Activated B cell treated with CpG ODN at 0.5 μM for 24 hours (primary cell): ENCODE measurements at regions of chr15 and their contacts with region 1.

Region 1: DNA sequence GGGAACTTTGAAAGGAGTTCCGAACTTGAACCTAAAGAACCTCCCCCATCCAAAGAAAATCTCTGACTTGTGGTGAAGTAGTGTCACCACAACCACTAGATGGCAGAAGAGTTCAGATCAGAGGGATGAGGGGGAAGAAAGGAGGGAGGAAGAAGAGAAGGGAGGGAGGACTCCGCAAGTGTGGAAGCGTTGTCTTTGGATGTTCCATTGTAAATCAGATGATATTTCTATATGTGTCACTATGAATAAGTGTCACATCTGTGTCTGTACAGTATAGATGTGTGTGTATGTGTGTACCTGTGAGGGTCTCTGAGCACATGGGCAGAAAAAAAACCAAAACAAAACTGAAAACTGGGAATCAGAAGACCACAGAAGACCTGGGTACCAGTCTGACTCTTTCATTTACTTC is 16.9 kb downstream of the SLC24A1 start:
- DNase-seq: no peak
- ATAC-seq: peak; percentile 73
- H3K4me3 Mint-ChIP-seq: no peak overlapping the region
- H3K27ac Mint-ChIP-seq: no peak overlapping the region
- H3K4me1 Mint-ChIP-seq: peaks cover 8% of the 10 kb centered on the region
- H3K27me3 Mint-ChIP-seq: no peaks in the 10 kb centered on the region
- CTCF ChIP-seq: peak; percentile 35

Region 2: DNA sequence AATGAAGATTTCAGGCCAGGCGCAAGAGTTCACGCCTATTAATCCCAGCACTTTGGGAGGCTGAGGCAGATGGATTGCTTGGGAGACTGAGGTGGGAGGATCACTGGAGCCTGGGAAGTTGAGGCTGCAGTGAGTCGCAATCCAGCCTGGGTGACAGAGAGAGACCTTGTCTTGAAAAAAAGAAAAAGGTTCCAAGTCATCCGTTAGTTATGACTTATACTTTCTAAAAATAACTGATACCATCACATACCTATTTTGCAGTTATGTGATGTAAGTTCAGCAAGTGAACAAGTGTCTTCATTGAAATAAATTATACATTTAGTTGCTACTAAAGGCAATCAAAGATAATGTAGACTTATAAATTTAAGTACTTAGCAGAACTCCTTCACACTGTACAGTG is 475.6 kb before region 1 on chr15:
- CTCF ChIA-PET with region 1: no interaction called
- POLR2A ChIA-PET with region 1: no interaction called
- intact Hi-C with region 1: no loop called
- DNase-seq: no peak
- ATAC-seq: no peak
- H3K4me3 Mint-ChIP-seq: no peak overlapping the region
- H3K27ac Mint-ChIP-seq: no peak overlapping the region
- H3K4me1 Mint-ChIP-seq: no peaks in the 10 kb centered on the region
- H3K27me3 Mint-ChIP-seq: no peaks in the 10 kb centered on the region
- CTCF ChIP-seq: no peak

Region 3: GRCh38 chr15:65856821-65857455 is 218.3 kb after region 1 on chr15:
- CTCF ChIA-PET with region 1: interaction called, 8 read pairs
- POLR2A ChIA-PET with region 1: no interaction called
- intact Hi-C with region 1: loop called (anchors 1 kb)
- DNase-seq: peak; percentile 47
- ATAC-seq: peak; percentile 82
- H3K4me3 Mint-ChIP-seq: no peak overlapping the region
- H3K27ac Mint-ChIP-seq: no peak overlapping the region
- H3K4me1 Mint-ChIP-seq: peaks cover 14% of the 10 kb centered on the region
- H3K27me3 Mint-ChIP-seq: no peaks in the 10 kb centered on the region
- CTCF ChIP-seq: peak; percentile 81

Region 4: GRCh38 chr15:65962187-65962586 is 323.5 kb after region 1 on chr15:
- CTCF ChIA-PET with region 1: no interaction called
- POLR2A ChIA-PET with region 1: no interaction called
- intact Hi-C with region 1: loop called (anchors 1 kb)
- DNase-seq: no peak
- ATAC-seq: no peak
- H3K4me3 Mint-ChIP-seq: no peak overlapping the region
- H3K27ac Mint-ChIP-seq: no peak overlapping the region
- H3K4me1 Mint-ChIP-seq: no peaks in the 10 kb centered on the region
- H3K27me3 Mint-ChIP-seq: peaks cover 29% of the 10 kb centered on the region
- CTCF ChIP-seq: no peak

Region 5: DNA sequence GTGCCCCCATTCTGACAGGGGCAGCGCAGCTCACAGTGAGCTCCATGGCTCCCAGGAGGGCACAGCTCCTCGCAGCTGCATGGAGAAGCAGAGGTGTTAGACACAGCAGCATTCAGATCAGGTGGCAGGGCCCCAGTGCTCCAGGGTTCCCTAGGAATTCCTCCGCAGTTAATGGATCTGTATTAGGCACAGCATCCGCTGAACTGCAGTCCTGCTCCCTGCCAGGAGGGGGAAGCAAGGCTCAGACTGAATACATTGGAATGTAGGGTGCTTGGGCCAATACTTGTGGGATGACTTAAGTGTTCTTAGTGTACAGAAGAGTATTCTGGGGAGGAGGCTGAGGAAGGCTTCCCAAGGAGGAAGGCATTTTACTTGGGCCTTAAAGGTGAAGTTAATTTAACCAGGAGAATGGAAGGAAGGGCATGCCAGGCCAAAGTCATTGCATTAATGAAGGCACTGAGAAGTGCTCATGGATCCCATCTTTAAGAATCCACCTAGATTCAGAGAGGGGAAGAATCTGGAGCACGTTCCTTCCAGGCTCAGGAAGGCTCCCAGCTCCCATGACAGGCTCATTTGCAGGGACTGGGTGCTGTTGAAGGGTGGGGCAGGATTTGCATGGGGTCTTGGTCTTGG is 342.3 kb after region 1 on chr15:
- CTCF ChIA-PET with region 1: no interaction called
- POLR2A ChIA-PET with region 1: no interaction called
- intact Hi-C with region 1: loop called (anchors 5 kb)
- DNase-seq: no peak
- ATAC-seq: no peak
- H3K4me3 Mint-ChIP-seq: no peak overlapping the region
- H3K27ac Mint-ChIP-seq: no peak overlapping the region
- H3K4me1 Mint-ChIP-seq: peaks cover 19% of the 10 kb centered on the region
- H3K27me3 Mint-ChIP-seq: peaks cover 26% of the 10 kb centered on the region
- CTCF ChIP-seq: no peak

Region 6: DNA sequence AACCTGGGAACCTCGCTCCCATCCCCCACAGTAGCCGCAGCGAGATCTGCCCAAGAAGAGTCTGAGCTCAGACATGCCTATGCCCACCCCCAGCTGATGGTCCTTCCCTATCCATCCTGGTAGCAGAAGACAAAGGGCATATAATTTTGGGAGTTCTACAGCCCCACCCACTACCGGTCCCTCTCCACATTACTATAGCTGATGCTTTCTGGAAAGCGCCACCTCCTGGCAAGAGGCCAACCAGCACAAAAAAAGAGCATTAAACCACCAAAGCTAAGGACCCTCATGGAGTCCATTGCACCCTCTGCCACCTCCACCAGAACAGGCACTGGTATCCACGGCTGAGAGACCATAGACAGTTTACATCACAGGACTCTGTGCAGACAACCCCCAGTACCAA is 446.4 kb after region 1 on chr15:
- CTCF ChIA-PET with region 1: no interaction called
- POLR2A ChIA-PET with region 1: no interaction called
- intact Hi-C with region 1: loop called (anchors 2 kb)
- DNase-seq: no peak
- ATAC-seq: no peak
- H3K4me3 Mint-ChIP-seq: no peak overlapping the region
- H3K27ac Mint-ChIP-seq: no peak overlapping the region
- H3K4me1 Mint-ChIP-seq: no peaks in the 10 kb centered on the region
- H3K27me3 Mint-ChIP-seq: peaks cover 24% of the 10 kb centered on the region
- CTCF ChIP-seq: no peak

Region 7: GRCh38 chr15:66190746-66191145 is 552.1 kb after region 1 on chr15:
- CTCF ChIA-PET with region 1: no interaction called
- POLR2A ChIA-PET with region 1: no interaction called
- intact Hi-C with region 1: loop called (anchors 1 kb)
- DNase-seq: no peak
- ATAC-seq: no peak
- H3K4me3 Mint-ChIP-seq: no peak overlapping the region
- H3K27ac Mint-ChIP-seq: no peak overlapping the region
- H3K4me1 Mint-ChIP-seq: peaks cover 3% of the 10 kb centered on the region
- H3K27me3 Mint-ChIP-seq: peaks cover 9% of the 10 kb centered on the region
- CTCF ChIP-seq: no peak

Region 8: GRCh38 chr15:66287461-66288057 is 648.9 kb after region 1 on chr15:
- CTCF ChIA-PET with region 1: interaction called, 4 read pairs
- POLR2A ChIA-PET with region 1: interaction called, 4 read pairs
- intact Hi-C with region 1: loop called (anchors 5 kb)
- DNase-seq: no peak
- ATAC-seq: no peak
- H3K4me3 Mint-ChIP-seq: no peak overlapping the region
- H3K27ac Mint-ChIP-seq: no peak overlapping the region
- H3K4me1 Mint-ChIP-seq: peaks cover 18% of the 10 kb centered on the region
- H3K27me3 Mint-ChIP-seq: no peaks in the 10 kb centered on the region
- CTCF ChIP-seq: peak; percentile 79